GM12878 (cell line): ENCODE measurements at regions of chr14 and their contacts with region 1.

Region 1: GRCh38 chr14:22386924-22387775 is 201.9 kb downstream of the DAD1 start:
- DNase-seq: peak; percentile 77
- ATAC-seq: peak; percentile 18
- H3K4me3 ChIP-seq: no peak overlapping the region
- H3K27ac ChIP-seq: no peak overlapping the region
- H3K4me1 ChIP-seq: peaks cover 69% of the 10 kb centered on the region
- H3K27me3 ChIP-seq: no peaks in the 10 kb centered on the region
- CTCF ChIP-seq: peak; percentile 67 to 87 (median 79)
- EP300 ChIP-seq: no peak
- POLR2A ChIP-seq: no peak
- RAD21 ChIP-seq: peak; percentile 98

Region 2: GRCh38 chr14:22303589-22304195 is 83.5 kb before region 1 on chr14:
- CTCF ChIA-PET with region 1: interaction called, 24 read pairs
- POLR2A ChIA-PET with region 1: interaction called, 3 read pairs
- RAD21 ChIA-PET with region 1: interaction called, 8 read pairs
- SMC1A ChIA-PET with region 1: interaction called, 18 read pairs
- in situ Hi-C with region 1: no loop called
- intact Hi-C with region 1: no loop called
- DNase-seq: no peak
- ATAC-seq: no peak
- H3K4me3 ChIP-seq: no peak overlapping the region
- H3K27ac ChIP-seq: no peak overlapping the region
- H3K4me1 ChIP-seq: no peaks in the 10 kb centered on the region
- H3K27me3 ChIP-seq: 0 out of 4 replicates have a peak, but pooled peaks cover 0 to 5% of the 10 kb centered on the region in 2 experiments
- CTCF ChIP-seq: peak; percentile 39 to 48 (median 44); a peak in 4 of 6 replicates
- EP300 ChIP-seq: no peak
- POLR2A ChIP-seq: no peak
- RAD21 ChIP-seq: peak; percentile 61

Region 3: GRCh38 chr14:22400655-22401259 is 13.6 kb after region 1 on chr14:
- CTCF ChIA-PET with region 1: interaction called, 9 read pairs
- POLR2A ChIA-PET with region 1: no interaction called
- RAD21 ChIA-PET with region 1: interaction called, 3 read pairs
- SMC1A ChIA-PET with region 1: interaction called, 14 read pairs
- in situ Hi-C with region 1: no loop called
- intact Hi-C with region 1: no loop called
- DNase-seq: no peak
- ATAC-seq: no peak
- H3K4me3 ChIP-seq: no peak overlapping the region
- H3K27ac ChIP-seq: no peak overlapping the region
- H3K4me1 ChIP-seq: no peaks in the 10 kb centered on the region
- H3K27me3 ChIP-seq: peaks cover 0 to 3% of the 10 kb centered on the region in 2 experiments; a peak in 2 of 4 replicates
- CTCF ChIP-seq: no peak
- EP300 ChIP-seq: no peak
- POLR2A ChIP-seq: no peak
- RAD21 ChIP-seq: no peak

Region 4: DNA sequence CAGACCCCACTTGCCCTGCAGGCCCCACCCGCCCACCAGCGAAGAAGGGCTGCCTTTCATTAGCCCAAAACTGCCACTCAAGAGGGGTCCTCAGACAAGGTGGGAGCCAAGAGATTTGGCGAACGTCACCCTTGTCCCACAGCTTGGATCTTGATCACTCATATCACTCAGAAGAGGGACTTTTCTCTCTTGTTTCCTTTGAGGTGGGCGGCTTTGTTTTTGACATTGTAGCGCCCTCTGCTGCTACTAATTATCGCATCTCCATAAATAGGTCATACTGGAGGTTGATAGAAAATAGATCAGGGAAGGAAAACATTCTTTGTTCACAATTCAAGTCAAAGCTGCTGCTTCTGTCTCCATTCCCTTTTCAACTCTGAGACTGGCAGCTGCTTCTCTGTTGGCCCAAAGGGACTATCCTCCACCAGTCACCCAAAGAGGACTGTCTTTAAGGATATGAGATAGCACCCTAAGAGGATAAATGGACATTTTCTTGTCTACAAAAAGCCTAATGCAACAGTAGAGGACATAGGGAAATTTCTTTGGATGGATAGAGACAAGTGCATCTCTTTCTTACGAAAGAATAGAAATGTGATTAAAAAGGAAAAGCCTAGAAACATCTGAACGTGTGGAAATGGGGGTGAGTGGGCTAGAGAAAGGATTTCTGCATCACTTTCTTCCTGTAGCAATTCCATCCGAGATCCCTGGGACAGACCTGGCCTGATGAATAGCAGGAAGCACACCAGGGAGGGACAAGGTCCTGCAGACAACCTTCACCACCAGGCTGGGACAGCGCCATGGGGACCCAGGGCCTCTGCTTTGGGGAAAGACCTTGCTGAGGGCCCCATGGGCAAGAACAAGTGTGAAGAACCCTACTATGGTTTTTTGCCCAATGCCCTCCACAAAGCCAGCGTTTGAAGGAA is 86.0 kb after region 1 on chr14:
- CTCF ChIA-PET with region 1: interaction called, 411 read pairs
- POLR2A ChIA-PET with region 1: interaction called, 73 read pairs
- RAD21 ChIA-PET with region 1: interaction called, 272 read pairs
- SMC1A ChIA-PET with region 1: interaction called, 912 read pairs
- in situ Hi-C with region 1: loop called (anchors 5 kb)
- intact Hi-C with region 1: loop called (anchors 1 kb)
- DNase-seq: no peak
- ATAC-seq: peak; percentile 67
- H3K4me3 ChIP-seq: no peak overlapping the region
- H3K27ac ChIP-seq: peak overlapping the region; percentile 49
- H3K4me1 ChIP-seq: peaks cover 50% of the 10 kb centered on the region
- H3K27me3 ChIP-seq: no peaks in the 10 kb centered on the region
- CTCF ChIP-seq: peak; percentile 59 to 72 (median 72)
- EP300 ChIP-seq: no peak
- POLR2A ChIP-seq: no peak
- RAD21 ChIP-seq: peak; percentile 96

Region 5: DNA sequence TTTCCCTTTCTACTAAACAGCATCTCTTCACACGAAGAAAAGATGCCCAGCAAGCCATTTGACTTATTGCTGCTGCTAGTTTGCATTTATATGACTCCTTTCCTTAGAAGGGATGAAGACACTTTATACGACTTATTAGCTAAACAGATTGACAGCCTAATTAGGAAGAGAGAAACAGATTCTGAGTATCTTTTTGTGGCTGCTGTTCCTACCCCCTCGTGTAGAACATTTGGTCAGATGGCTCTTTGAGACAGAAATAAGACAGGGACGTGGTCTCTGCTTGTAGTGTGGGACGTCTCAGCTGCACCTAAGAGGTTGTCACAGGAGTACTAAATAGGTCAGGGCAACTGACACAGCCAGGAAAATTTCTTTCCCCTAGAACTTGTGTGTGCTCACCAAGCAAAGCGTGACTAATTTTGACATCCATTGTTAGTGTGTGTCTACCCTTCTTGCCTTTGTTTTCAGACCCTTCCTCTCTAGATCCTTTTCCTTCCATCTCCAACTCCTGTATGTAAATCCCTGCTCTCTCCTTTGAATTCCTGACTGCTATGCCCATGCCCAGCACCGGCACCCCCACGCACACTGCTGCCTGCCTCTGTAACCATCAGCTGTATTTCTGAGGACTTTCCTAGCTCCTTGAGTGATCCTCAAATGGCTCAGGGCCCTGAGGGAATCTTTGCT is 118.7 kb after region 1 on chr14:
- CTCF ChIA-PET with region 1: interaction called, 7 read pairs
- POLR2A ChIA-PET with region 1: interaction called, 10 read pairs
- RAD21 ChIA-PET with region 1: interaction called, 13 read pairs
- SMC1A ChIA-PET with region 1: interaction called, 15 read pairs
- in situ Hi-C with region 1: no loop called
- intact Hi-C with region 1: no loop called
- DNase-seq: no peak
- ATAC-seq: peak; percentile 29
- H3K4me3 ChIP-seq: peak overlapping the region; percentile 68
- H3K27ac ChIP-seq: peak overlapping the region; percentile 98
- H3K4me1 ChIP-seq: peaks cover 50% of the 10 kb centered on the region
- H3K27me3 ChIP-seq: no peaks in the 10 kb centered on the region
- CTCF ChIP-seq: no peak
- EP300 ChIP-seq: peak in 1 of 2 experiments; percentile 49; a peak in 1 of 4 replicates
- POLR2A ChIP-seq: peak; percentile 60; the same call in 1 of the 2 replicates
- RAD21 ChIP-seq: 0 out of 2 replicates have a peak, but pooled peaks have one; percentile 8

Region 6: DNA sequence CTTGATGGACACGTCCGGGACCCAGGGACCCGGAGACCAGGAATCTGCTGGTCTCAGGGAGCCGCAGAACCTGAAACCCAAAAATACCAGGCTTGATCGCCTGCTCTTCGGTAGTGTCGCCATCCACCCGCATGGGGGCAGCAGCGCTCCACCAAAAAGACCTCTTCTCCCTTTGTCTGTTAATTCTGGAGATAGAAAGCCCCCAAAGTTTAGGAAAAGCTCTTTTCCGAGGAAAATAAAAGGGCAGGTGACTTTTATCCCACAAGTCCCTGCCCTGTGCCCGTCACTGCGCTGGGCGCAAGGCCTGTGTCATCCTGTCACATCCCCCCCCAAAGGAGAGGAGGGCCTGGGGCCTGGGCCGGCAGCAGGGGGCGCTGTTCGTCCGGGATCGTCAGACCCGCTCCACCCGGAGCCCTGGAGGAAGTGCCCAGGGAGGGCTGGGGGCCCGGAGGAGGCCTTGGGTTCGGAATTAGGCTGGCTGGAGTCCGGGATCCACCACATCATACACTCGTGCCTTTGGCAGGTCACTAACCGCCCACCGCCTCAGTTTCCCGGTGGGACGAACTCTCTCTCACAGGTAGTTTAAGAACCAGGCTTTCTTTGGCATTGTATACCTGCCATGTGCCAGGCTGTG is 170.0 kb after region 1 on chr14:
- CTCF ChIA-PET with region 1: interaction called, 45 read pairs
- POLR2A ChIA-PET with region 1: interaction called, 19 read pairs
- RAD21 ChIA-PET with region 1: interaction called, 156 read pairs
- SMC1A ChIA-PET with region 1: interaction called, 34 read pairs
- in situ Hi-C with region 1: no loop called
- intact Hi-C with region 1: loop called (anchors 1 kb)
- DNase-seq: no peak
- ATAC-seq: peak; percentile 58
- H3K4me3 ChIP-seq: peak overlapping the region; percentile 51; the same call in 1 of the 2 replicates
- H3K27ac ChIP-seq: peak overlapping the region; percentile 100
- H3K4me1 ChIP-seq: peaks cover 73% of the 10 kb centered on the region
- H3K27me3 ChIP-seq: no peaks in the 10 kb centered on the region
- CTCF ChIP-seq: peak; percentile 66 to 93 (median 86)
- EP300 ChIP-seq: no peak
- POLR2A ChIP-seq: peak; percentile 5; the same call in 1 of the 2 replicates
- RAD21 ChIP-seq: peak; percentile 74